ENCODE measurements at regions of chr15 and their contacts with region 1.

Region 1: GRCh38 chr15:29917600-29918597 is 95.6 kb upstream of the TJP1 start:
- DNase-seq: no peak
- H3K4me3 ChIP-seq: no peak overlapping the region
- H3K27ac ChIP-seq: no peak overlapping the region
- H3K4me1 ChIP-seq: peaks cover 27% of the 10 kb centered on the region
- H3K27me3 ChIP-seq: no peaks in the 10 kb centered on the region
- CTCF ChIP-seq: no peak

Region 2: DNA sequence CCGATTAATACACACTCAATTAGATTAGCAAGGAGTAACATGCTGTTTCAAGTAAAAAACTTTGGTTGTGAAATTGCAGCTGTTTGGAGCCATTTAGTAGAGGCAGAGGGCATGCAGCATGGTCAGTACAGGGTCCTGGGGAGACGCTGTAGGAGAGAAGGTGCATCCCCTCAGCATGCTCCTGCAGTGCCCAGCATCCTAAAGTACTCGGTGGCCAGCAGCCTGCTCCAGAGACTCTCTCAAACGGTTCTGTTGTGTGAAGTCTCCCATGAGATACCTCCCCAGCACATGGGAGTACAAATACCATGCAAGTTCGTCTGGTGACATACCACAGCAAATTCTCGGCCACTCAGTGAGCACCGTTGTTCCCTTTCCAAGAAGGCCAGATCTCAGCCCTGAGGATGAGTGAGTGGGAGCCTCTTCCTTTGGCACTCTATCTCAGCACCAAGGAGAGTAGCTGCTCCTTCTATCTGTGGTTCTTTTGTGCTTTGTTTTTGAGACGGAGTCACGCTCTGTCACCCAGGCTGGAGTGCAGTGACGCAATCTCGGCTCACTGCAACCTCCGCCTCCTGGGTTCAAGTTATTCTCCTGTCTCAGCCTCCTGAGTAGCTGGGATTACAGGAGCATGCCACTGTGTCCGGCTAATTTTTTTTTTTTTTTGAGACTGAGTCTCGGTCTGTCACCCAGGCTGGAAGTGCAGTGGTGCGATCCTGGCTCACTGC is 168.4 kb before region 1 on chr15:
- intact Hi-C with region 1: loop called (anchors 5 kb)
- DNase-seq: no peak
- H3K4me3 ChIP-seq: no peak overlapping the region
- H3K27ac ChIP-seq: peak overlapping the region; percentile 22
- H3K4me1 ChIP-seq: peaks cover 20% of the 10 kb centered on the region
- H3K27me3 ChIP-seq: no peaks in the 10 kb centered on the region
- CTCF ChIP-seq: no peak